Spleen (tissue), 13 donors: ENCODE measurements at regions of chr12 and their contacts with region 1.

Region 1: DNA sequence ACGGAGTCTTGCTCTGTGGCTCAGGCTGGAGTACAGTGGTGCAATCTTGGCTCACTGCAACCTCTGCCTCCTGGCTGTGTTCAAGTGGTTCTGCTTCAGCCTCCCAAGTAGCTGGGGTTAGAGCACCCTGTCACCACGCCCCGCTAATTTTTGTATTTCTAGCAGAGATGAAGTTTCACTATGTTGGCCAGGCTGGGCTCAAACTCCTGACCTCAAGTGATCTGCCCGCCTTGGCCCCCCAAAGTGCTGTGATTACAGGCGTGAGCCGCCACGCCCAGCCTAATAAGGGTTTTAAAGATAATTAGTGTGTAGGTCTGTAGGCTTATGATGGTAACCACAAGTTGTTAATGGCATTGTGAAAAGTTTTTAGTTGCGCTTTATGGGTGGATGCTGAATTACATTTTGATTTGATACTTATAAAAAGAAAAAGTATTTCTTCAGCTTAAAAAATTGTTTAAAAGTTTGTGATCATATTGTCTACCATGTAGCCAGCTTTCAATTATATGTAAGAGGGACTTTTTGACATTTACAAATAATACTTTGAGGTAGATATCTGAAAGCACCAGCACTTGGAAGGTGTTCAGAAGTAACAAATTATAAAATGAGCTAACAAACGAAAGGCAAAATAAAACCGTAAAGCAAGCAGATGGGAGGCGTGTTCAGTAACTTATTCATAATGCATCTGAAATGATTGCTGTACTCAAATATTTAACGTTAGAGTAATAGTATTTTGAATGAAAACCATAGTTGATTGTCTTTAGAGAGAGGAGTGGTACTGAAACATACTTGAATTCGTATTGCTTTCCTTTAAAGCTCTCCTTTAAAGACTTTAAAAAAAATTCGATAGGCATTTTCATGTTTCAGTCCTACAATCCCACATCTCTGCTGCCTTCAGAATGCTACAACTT is 37.1 kb downstream of the MDM2 start:
- DNase-seq: no peak
- H3K4me3 ChIP-seq: no peak overlapping the region
- H3K27ac ChIP-seq: no peak overlapping the region
- H3K4me1 ChIP-seq: peaks cover 0 to 5% (median 0%) of the 10 kb centered on the region in 6 donors
- H3K27me3 ChIP-seq: no peaks in the 10 kb centered on the region
- CTCF ChIP-seq: no peak
- POLR2A ChIP-seq: no peak

Region 2: GRCh38 chr12:68915055-68915454 is 70.0 kb after region 1 on chr12:
- intact Hi-C with region 1: no loop called
- DNase-seq: no peak
- H3K4me3 ChIP-seq: no peak overlapping the region
- H3K27ac ChIP-seq: no peak overlapping the region
- H3K4me1 ChIP-seq: peaks cover 0 to 11% (median 0%) of the 10 kb centered on the region in 6 donors
- H3K27me3 ChIP-seq: no peaks in the 10 kb centered on the region
- CTCF ChIP-seq: no peak
- POLR2A ChIP-seq: no peak

Region 3: DNA sequence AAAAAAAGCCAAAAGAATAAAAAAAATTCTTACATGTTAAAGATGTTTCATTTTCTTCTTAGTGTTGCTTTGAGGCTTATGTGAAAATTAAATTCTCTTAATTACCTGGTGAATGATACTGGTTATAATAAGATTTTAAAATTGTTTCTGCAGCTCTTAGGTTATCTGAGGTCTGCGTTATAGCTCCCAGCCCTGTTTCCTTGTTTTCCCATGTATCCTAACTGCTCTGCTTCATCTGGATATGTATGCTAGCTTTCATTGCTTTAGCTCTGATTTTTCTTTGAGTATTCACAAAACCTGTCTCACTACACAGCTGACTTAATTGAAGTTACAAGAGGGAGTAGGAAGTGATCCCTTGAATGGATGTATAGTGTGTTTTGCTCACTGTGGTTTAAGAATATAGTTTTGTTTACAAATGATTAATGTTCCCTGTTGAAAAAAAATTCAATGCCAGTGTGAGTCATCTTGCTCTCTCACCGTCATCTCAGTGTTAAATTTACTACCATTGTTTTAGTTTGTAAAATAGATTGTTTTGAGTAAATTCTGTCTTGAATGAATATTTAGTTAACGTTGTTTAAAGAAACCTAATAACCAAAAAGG is 421.1 kb after region 1 on chr12:
- intact Hi-C with region 1: loop called (anchors 10 kb)
- DNase-seq: no peak
- H3K4me3 ChIP-seq: no peak overlapping the region
- H3K27ac ChIP-seq: no peak overlapping the region
- H3K4me1 ChIP-seq: no peaks in the 10 kb centered on the region
- H3K27me3 ChIP-seq: no peaks in the 10 kb centered on the region
- CTCF ChIP-seq: no peak
- POLR2A ChIP-seq: no peak